ENCODE measurements at regions of chr11 and their contacts with region 1.

Region 1: DNA sequence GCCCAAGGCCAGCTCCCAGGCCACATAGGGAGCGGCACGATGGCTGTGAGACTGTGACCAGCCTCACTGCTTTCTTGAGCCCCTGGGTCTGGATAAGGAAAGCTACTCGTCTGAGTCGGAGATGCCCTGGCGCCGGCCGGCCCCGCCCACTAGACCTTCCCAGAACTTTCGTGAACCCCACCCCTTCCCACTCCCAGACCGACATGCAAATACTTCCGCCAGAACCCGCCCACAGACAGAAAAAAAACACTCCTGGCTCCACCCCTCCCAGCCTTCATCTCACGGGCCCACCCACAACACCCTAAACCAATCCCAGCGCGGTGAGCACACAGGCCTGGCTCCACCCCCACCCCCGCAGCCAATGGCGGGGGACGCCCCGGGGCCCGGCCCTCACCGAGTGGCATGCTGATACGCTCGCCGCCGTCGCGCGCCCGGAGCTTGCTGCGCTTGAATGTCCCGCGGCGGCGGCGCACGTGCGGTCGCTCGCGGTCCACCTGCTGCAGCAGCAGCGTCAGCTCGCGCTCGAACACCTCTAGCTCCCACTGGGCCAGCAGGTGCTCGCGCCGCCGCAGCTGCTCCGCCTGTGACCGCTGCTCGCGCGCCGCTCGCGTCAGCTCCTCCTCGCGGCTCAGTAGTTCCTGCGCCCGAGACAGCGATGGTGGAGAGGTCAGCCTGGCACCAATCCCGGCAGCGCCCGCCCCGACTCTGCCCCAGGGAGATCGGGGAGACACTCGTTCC is 7.0 kb downstream of the MAP3K11 start:
- DNase-seq: no peak
- H3K4me3 Mint-ChIP-seq: no peak overlapping the region
- H3K27ac Mint-ChIP-seq: no peak overlapping the region
- H3K4me1 Mint-ChIP-seq: peaks cover 38% of the 10 kb centered on the region
- H3K27me3 Mint-ChIP-seq: no peaks in the 10 kb centered on the region

Region 2: GRCh38 chr11:65593518-65594298 is 13.3 kb before region 1 on chr11:
- CTCF ChIA-PET with region 1: interaction called, 24 read pairs
- POLR2A ChIA-PET with region 1: no interaction called
- DNase-seq: peak; percentile 52
- H3K4me3 Mint-ChIP-seq: no peak overlapping the region
- H3K27ac Mint-ChIP-seq: peak overlapping the region; percentile 57
- H3K4me1 Mint-ChIP-seq: peaks cover 34% of the 10 kb centered on the region
- H3K27me3 Mint-ChIP-seq: no peaks in the 10 kb centered on the region

Measured in activated CD4-positive, alpha-beta T cell treated with anti-CD3 and anti-CD28 coated beads, Interleukin-2, amount 10 ng/mL, durations not matched to agents 7 days and 5 days (primary cell).